ENCODE measurements at regions of chr21 and their contacts with region 1.

Region 1: DNA sequence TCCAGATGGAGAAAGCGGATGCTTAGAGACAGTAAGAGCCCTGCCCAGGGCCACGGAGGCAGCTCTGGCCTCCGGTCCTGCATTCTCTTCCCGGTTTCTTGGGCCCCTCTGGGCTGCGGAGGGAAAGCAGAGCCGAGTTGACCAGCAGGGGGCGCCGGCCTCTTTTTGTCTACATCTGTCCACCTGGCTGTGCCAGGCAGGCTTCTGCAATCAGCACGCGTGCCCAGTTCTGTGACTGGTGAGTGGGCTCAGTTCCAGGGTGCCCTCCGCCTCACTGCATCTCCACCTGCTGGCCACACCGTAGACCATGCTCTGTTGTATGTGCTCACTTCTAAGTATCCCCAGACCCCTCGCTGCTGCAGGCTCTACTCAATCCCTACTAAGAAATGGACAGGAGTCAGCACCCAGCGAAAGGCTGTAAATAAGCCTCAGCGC is 6.7 kb upstream of the HUNK start:
- DNase-seq: peak; percentile 65
- ATAC-seq: peak; percentile 98
- H3K4me3 ChIP-seq: no peak overlapping the region
- H3K27ac ChIP-seq: no peak overlapping the region
- H3K4me1 ChIP-seq: no peaks in the 10 kb centered on the region; the same call in 1 of the 2 replicates
- H3K27me3 ChIP-seq: peaks cover 0 to 18% of the 10 kb centered on the region in 2 experiments; a peak in 3 of 5 replicates
- CTCF ChIP-seq: peak; percentile 90
- EP300 ChIP-seq: no peak
- POLR2A ChIP-seq: no peak
- RAD21 ChIP-seq: peak; percentile 85

Region 2: DNA sequence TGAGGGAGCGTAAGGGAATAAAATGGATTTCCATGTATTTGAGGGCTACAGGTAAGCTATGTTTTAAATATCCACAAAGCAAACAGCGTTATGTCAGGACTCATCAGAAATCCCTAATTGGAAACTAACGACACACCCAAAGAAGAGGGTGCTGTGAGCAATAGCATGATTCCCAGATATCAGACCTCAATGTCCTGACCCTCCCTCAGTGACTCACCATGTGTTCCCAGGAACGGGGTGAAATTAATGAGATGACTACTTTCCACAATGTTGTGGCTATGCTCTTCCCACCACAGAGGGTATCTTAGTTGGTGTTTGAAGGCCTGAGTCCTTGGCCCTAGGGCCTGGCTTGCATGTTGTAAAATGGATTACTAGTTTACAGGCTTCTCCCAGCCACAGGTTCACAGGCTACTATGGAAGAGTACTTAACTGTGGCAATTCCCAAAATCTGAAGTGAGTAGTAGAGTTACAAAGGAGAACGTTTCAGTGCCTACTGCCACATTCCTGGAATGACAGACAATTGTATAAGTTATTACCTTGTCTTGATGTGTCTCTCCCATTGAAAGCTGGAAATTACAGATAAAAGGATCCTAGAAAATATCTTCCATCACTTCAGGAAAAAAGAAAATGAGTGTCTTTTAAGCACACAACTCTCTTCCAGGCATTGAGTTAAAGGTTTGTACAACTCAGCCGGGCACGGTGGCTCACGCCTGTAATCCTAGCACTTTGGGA is 983.1 kb before region 1 on chr21:
- CTCF ChIA-PET with region 1: no interaction called
- POLR2A ChIA-PET with region 1: no interaction called
- in situ Hi-C with region 1: no loop called
- intact Hi-C with region 1: no loop called
- DNase-seq: no peak
- ATAC-seq: no peak
- H3K4me3 ChIP-seq: no peak overlapping the region
- H3K27ac ChIP-seq: no peak overlapping the region
- H3K4me1 ChIP-seq: no peaks in the 10 kb centered on the region
- H3K27me3 ChIP-seq: no peaks in the 10 kb centered on the region
- CTCF ChIP-seq: no peak
- EP300 ChIP-seq: no peak
- POLR2A ChIP-seq: no peak
- RAD21 ChIP-seq: no peak

Region 3: DNA sequence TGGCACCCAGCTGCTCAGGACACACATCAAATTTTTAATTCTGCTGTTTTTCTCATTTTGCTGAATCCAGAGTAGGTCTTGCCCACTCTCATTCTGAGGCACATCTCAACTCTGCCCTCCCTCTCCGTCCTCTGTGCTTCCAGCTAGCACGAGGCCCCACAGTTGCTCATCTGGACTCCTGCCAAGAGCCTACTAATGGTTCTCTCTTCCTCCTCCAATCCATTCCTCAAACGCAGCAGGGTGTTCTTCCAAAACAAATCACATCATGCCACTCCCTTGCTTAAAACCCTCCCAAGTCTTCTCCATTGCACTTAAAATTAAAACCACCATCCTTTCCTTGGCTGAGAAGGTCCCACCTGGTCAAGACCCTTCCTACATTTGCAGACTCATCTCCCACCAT is 84.4 kb before region 1 on chr21:
- CTCF ChIA-PET with region 1: no interaction called
- POLR2A ChIA-PET with region 1: no interaction called
- in situ Hi-C with region 1: no loop called
- intact Hi-C with region 1: loop called (anchors 2 kb)
- DNase-seq: no peak
- ATAC-seq: no peak
- H3K4me3 ChIP-seq: no peak overlapping the region
- H3K27ac ChIP-seq: no peak overlapping the region
- H3K4me1 ChIP-seq: no peaks in the 10 kb centered on the region
- H3K27me3 ChIP-seq: peaks cover 0 to 6% of the 10 kb centered on the region in 2 experiments; a peak in 1 of 5 replicates
- CTCF ChIP-seq: no peak
- EP300 ChIP-seq: no peak
- POLR2A ChIP-seq: no peak
- RAD21 ChIP-seq: no peak

Region 4: DNA sequence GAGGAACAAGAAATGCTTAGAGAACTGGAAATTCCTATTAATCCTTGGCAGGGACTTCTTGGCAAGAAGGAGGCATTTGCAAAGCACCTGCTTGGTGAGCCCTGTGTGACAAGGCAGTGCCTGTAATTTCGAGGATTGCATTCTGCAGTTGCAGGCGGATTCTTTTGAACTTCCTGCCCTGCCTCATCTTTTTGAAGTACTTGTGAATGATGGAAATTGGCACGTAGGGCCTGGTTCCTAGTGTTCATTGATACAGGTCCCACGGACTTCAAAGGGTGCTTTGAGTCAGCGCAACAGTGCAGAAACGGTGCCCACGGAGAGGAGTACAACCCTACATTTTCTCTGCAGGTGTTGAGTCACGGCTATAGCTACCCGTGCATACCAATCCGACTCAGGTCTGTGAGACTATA is 13.2 kb after region 1 on chr21:
- CTCF ChIA-PET with region 1: no interaction called
- POLR2A ChIA-PET with region 1: no interaction called
- in situ Hi-C with region 1: no loop called
- intact Hi-C with region 1: no loop called
- DNase-seq: no peak
- ATAC-seq: no peak
- H3K4me3 ChIP-seq: no peak overlapping the region
- H3K27ac ChIP-seq: no peak overlapping the region
- H3K4me1 ChIP-seq: peaks cover 75% of the 10 kb centered on the region
- H3K27me3 ChIP-seq: no peaks in the 10 kb centered on the region
- CTCF ChIP-seq: no peak
- EP300 ChIP-seq: no peak; a peak in 1 of 4 replicates
- POLR2A ChIP-seq: no peak
- RAD21 ChIP-seq: no peak

Region 5: DNA sequence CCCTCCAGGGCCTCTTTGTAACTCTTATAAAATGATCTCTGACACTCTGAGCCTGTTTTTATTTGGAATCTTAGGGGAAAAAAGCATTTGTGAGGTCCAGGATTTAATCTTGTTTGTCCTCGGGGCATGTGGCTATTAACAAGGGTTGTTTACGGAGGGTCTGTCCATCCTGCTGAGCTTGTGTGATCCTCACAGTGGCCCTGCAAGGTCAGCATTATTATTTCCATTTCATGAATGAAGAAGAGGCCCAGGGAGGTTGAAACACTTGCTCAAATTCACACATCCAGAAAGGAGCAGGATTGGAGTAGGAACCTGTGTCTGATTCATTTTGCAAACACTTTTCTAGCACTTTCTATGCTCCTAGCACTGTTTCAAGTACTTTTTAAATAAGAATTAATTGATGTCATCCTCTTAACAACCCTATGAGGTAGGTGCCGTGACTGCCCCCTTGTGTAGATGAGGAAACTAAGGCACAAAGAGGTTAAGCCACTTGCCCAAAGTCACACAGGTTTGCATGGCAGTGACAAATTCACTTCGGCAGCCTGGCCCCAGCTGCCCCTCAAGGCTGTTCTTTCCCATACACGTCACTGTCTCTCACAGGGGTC is 233.8 kb after region 1 on chr21:
- CTCF ChIA-PET with region 1: no interaction called
- POLR2A ChIA-PET with region 1: no interaction called
- in situ Hi-C with region 1: no loop called
- intact Hi-C with region 1: loop called (anchors 10 kb)
- DNase-seq: no peak
- ATAC-seq: no peak
- H3K4me3 ChIP-seq: no peak overlapping the region
- H3K27ac ChIP-seq: no peak overlapping the region
- H3K4me1 ChIP-seq: no peaks in the 10 kb centered on the region
- H3K27me3 ChIP-seq: no peaks in the 10 kb centered on the region
- CTCF ChIP-seq: no peak
- EP300 ChIP-seq: no peak
- POLR2A ChIP-seq: no peak
- RAD21 ChIP-seq: no peak

Measured in HepG2 (cell line).